ENCODE measurements at regions of chr3 and their contacts with region 1.

Region 1: DNA sequence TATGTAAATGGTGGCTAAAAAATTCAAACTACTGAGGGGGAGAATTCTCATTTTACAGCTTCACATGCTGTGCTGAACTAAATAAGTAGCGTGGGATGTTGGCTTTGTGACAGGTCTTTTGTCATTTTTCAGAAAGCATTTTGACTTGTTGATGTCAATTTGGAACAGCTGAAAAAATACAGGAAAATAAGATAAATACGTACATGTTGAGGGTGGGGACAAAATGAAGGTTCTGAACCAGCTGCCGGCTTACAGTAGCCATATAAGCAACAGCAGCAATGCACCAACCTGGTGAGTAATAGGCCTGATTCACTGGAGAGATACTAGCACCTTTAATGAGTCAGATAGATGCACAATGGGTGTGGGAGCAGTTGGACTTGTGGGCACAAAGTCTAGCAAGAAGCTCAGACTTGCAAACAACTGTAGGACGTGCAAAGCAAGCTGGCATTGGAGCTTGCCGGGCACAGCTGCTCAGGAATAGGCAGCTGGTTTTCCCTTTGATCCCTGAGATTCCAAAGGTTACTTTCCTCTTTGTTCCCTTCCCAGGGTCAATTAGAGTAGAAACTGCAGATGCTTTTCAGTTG is 12.9 kb downstream of the B3GNT5 start:
- DNase-seq: peak; percentile 80
- H3K4me3 Mint-ChIP-seq: no peak overlapping the region
- H3K27ac Mint-ChIP-seq: no peak overlapping the region
- H3K4me1 Mint-ChIP-seq: peaks cover 6% of the 10 kb centered on the region
- H3K27me3 Mint-ChIP-seq: no peaks in the 10 kb centered on the region

Region 2: GRCh38 chr3:182980204-182981037 is 285.5 kb before region 1 on chr3 and contains the start of gene DCUN1D1:
- CTCF ChIA-PET with region 1: no interaction called
- intact Hi-C with region 1: no loop called
- DNase-seq: peak; percentile 88
- H3K4me3 Mint-ChIP-seq: peak within 1 kb of the TSS; percentile 88
- H3K27ac Mint-ChIP-seq: peak within 1 kb of the TSS; percentile 83
- H3K4me1 Mint-ChIP-seq: peaks cover 20% of the 10 kb centered on the region
- H3K27me3 Mint-ChIP-seq: no peaks in the 10 kb centered on the region
- total RNA-seq, gene DCUN1D1: 38.4 to 40.5 TPM

Region 3: GRCh38 chr3:183188895-183189462 is 76.9 kb before region 1 on chr3:
- CTCF ChIA-PET with region 1: interaction called, 7 read pairs
- intact Hi-C with region 1: loop called (anchors 2 kb)
- DNase-seq: peak; percentile 47
- H3K4me3 Mint-ChIP-seq: no peak overlapping the region
- H3K27ac Mint-ChIP-seq: no peak overlapping the region
- H3K4me1 Mint-ChIP-seq: peaks cover 27% of the 10 kb centered on the region
- H3K27me3 Mint-ChIP-seq: no peaks in the 10 kb centered on the region

Region 4: GRCh38 chr3:183224180-183224970 is 41.6 kb before region 1 on chr3:
- CTCF ChIA-PET with region 1: interaction called, 3 read pairs
- intact Hi-C with region 1: loop called (anchors 1 kb)
- DNase-seq: peak; percentile 73
- H3K4me3 Mint-ChIP-seq: peak overlapping the region; percentile 44
- H3K27ac Mint-ChIP-seq: peak overlapping the region; percentile 2
- H3K4me1 Mint-ChIP-seq: peaks cover 31% of the 10 kb centered on the region
- H3K27me3 Mint-ChIP-seq: no peaks in the 10 kb centered on the region

Region 5: GRCh38 chr3:183306798-183307671 is 41.1 kb after region 1 on chr3:
- CTCF ChIA-PET with region 1: no interaction called
- intact Hi-C with region 1: loop called (anchors 1 kb)
- DNase-seq: peak; percentile 71
- H3K4me3 Mint-ChIP-seq: peak overlapping the region; percentile 19
- H3K27ac Mint-ChIP-seq: peak overlapping the region; percentile 48
- H3K4me1 Mint-ChIP-seq: peaks cover 20% of the 10 kb centered on the region
- H3K27me3 Mint-ChIP-seq: no peaks in the 10 kb centered on the region

Region 6: GRCh38 chr3:183377307-183377959 is 111.5 kb after region 1 on chr3:
- CTCF ChIA-PET with region 1: interaction called, 7 read pairs
- intact Hi-C with region 1: loop called (anchors 1 kb)
- DNase-seq: no peak
- H3K4me3 Mint-ChIP-seq: no peak overlapping the region
- H3K27ac Mint-ChIP-seq: no peak overlapping the region
- H3K4me1 Mint-ChIP-seq: peaks cover 21% of the 10 kb centered on the region
- H3K27me3 Mint-ChIP-seq: no peaks in the 10 kb centered on the region

Measured in activated naive CD4-positive, alpha-beta T cell treated with anti-CD3 and anti-CD28 coated beads for 36 hours (primary cell).